CD4-positive, alpha-beta memory T cell (primary cell): ENCODE measurements at regions of chr16 and their contacts with region 1.

Region 1: GRCh38 chr16:2531767-2532493 is 722 bp upstream of the CEMP1 start:
- DNase-seq: peak; percentile 95 to 98 (median 96)
- H3K4me3 ChIP-seq: peak overlapping the region; percentile 67 to 95
- H3K4me3 Mint-ChIP-seq: peak overlapping the region; percentile 91 to 98 (median 96)
- H3K27ac ChIP-seq: peak overlapping the region; percentile 91
- H3K27ac Mint-ChIP-seq: peak overlapping the region; percentile 98 to 100 (median 99)
- H3K4me1 ChIP-seq: peaks cover 14% of the 10 kb centered on the region
- H3K4me1 Mint-ChIP-seq: peaks cover 4 to 35% (median 21%) of the 10 kb centered on the region in 4 donors
- H3K27me3 ChIP-seq: no peaks in the 10 kb centered on the region
- H3K27me3 Mint-ChIP-seq: peaks cover 0 to 2% of the 10 kb centered on the region in 2 donors

Region 2: DNA sequence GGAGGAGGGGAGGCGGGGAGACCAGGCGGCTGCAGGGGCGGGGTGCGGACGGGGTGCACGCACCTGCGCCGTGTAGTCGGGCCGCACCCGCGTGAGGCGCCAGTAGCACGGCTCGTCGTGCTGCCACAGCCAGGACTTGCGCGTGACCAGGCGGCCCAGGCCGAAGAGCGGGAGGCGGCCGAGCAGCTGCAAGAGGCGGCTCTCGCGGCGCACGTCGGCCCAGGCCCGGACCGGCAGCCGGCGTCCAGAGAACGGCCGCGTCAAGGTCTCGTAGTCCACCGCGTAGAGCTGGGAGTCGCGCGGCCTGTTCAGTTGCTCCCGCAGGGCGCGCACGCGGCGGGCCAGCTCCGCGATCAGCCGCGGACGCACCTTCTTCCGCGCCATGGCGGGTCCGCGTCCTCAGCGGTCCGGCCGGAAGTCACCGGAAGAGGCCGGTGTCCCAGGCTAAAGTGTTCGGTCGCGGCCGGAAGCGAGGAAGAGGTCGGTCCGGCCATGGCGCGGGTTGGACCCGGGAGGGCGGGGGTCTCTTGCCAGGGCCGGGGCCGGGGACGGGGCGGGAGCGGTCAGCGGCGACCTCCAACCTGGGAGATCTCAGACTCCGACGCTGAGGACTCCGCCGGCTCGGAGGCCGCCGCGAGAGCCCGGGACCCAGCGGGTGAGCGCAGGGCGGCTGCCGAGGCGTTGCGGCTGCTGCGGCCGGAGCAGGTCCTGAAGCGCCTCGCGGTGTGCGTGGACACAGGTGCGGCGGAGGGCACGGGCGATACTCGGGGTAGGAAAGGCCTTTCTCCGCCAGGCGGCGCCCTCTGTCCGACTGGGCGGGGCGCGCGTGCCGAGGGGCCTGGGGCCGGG is 759.0 kb before region 1 on chr16 and contains the starts of genes EME2 and MRPS34:
- CTCF ChIA-PET with region 1: no interaction called
- POLR2A ChIA-PET with region 1: interaction called, 4 read pairs
- intact Hi-C with region 1: loop called (anchors 5 kb)
- DNase-seq: peak; percentile 72 to 78 (median 74)
- H3K4me3 ChIP-seq: peak within 1 kb of the TSS; percentile 45 to 88
- H3K4me3 Mint-ChIP-seq: peak within 1 kb of the TSS; percentile 85 to 98 (median 96)
- H3K27ac ChIP-seq: peak within 1 kb of the TSS; percentile 72
- H3K27ac Mint-ChIP-seq: peak within 1 kb of the TSS; percentile 90 to 97 (median 95)
- H3K4me1 ChIP-seq: peaks cover 29% of the 10 kb centered on the region
- H3K4me1 Mint-ChIP-seq: peaks cover 11 to 32% (median 15%) of the 10 kb centered on the region in 4 donors
- H3K27me3 ChIP-seq: no peaks in the 10 kb centered on the region
- H3K27me3 Mint-ChIP-seq: no peaks in the 10 kb centered on the region
- total RNA-seq, gene EME2: 32.9 to 33.1 TPM
- total RNA-seq, gene MRPS34: 57.6 to 67.3 TPM

Region 3: GRCh38 chr16:2459647-2460390 is 72.1 kb before region 1 on chr16 and contains the start of gene TEDC2:
- CTCF ChIA-PET with region 1: no interaction called
- POLR2A ChIA-PET with region 1: interaction called, 3 read pairs
- intact Hi-C with region 1: loop called (anchors 2 kb)
- DNase-seq: peak; percentile 94 to 97 (median 96)
- H3K4me3 ChIP-seq: peak within 1 kb of the TSS; percentile 42 to 56
- H3K4me3 Mint-ChIP-seq: peak within 1 kb of the TSS; percentile 86 to 93 (median 88)
- H3K27ac ChIP-seq: peak within 1 kb of the TSS; percentile 53
- H3K27ac Mint-ChIP-seq: peak within 1 kb of the TSS; percentile 38 to 90 (median 80)
- H3K4me1 ChIP-seq: peaks cover 14% of the 10 kb centered on the region
- H3K4me1 Mint-ChIP-seq: peaks cover 5 to 8% (median 6%) of the 10 kb centered on the region in 4 donors
- H3K27me3 ChIP-seq: no peaks in the 10 kb centered on the region
- H3K27me3 Mint-ChIP-seq: no peaks in the 10 kb centered on the region
- total RNA-seq, gene TEDC2: 0.44 to 0.55 TPM

Region 4: DNA sequence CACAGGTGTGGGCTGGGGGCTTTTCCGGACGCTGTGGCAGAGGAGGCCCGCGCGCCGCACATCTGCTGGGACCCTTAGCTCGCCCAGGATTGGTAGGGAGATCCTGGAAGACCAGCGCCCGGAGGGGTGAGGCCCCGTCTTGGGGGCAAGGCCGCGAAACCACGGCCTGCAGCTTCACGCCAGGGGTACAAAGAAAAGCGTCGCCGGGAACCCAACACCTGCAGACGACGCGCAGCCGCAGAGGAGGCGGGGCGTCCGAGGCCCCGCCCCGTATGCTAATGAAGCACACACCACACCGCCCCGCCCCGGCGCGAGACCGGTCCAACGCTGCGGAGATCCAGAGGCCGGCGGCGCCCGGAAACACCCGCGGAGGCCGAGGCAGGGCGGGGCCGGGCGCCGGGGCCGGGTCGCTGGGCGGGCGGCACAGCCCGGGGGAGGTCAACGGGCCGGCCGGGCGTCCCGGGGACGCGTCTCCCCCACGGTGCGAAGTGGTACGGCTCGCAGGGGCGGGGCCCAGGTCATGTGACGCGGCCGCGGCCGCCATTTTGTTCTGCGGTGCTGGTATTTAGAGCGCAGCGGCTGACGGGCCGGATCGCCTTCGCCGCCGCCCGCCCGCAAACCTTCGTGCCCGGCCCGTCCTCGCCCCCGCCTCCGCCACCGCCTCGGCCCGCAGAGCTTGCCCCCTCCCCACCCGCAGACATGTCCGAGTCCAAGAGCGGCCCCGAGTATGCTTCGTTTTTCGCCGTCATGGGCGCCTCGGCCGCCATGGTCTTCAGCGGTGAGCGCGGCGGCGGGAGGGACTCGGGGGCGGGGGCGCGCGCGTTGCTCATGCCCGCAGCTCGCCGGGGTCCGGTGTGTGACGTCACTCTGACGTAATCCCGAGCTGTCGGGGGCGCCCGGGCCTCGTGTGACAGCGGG is 18.3 kb before region 1 on chr16 and contains the start of gene ATP6V0C:
- CTCF ChIA-PET with region 1: interaction called, 3 read pairs
- POLR2A ChIA-PET with region 1: interaction called, 170 read pairs
- intact Hi-C with region 1: loop called (anchors 1 kb)
- DNase-seq: peak; percentile 90 to 97 (median 94)
- H3K4me3 ChIP-seq: peak within 1 kb of the TSS; percentile 74 to 77
- H3K4me3 Mint-ChIP-seq: peak within 1 kb of the TSS; percentile 90 to 96 (median 92)
- H3K27ac ChIP-seq: peak within 1 kb of the TSS; percentile 94
- H3K27ac Mint-ChIP-seq: peak within 1 kb of the TSS; percentile 91 to 98 (median 97)
- H3K4me1 ChIP-seq: peaks cover 48% of the 10 kb centered on the region
- H3K4me1 Mint-ChIP-seq: peaks cover 32 to 64% (median 46%) of the 10 kb centered on the region in 4 donors
- H3K27me3 ChIP-seq: no peaks in the 10 kb centered on the region
- H3K27me3 Mint-ChIP-seq: no peaks in the 10 kb centered on the region
- total RNA-seq, gene ATP6V0C: 125 to 129 TPM

Region 5: GRCh38 chr16:2520092-2520783 is 11.7 kb before region 1 on chr16 and contains the start of gene AMDHD2:
- CTCF ChIA-PET with region 1: interaction called, 4 read pairs
- POLR2A ChIA-PET with region 1: interaction called, 170 read pairs
- intact Hi-C with region 1: loop called (anchors 1 kb)
- DNase-seq: peak; percentile 88 to 91 (median 89)
- H3K4me3 ChIP-seq: peak within 1 kb of the TSS; percentile 36 to 60
- H3K4me3 Mint-ChIP-seq: peak within 1 kb of the TSS; percentile 87 to 95 (median 93)
- H3K27ac ChIP-seq: peak within 1 kb of the TSS; percentile 84
- H3K27ac Mint-ChIP-seq: peak within 1 kb of the TSS; percentile 91 to 99 (median 97)
- H3K4me1 ChIP-seq: peaks cover 58% of the 10 kb centered on the region
- H3K4me1 Mint-ChIP-seq: peaks cover 42 to 69% (median 57%) of the 10 kb centered on the region in 4 donors
- H3K27me3 ChIP-seq: no peaks in the 10 kb centered on the region
- H3K27me3 Mint-ChIP-seq: peaks cover 0 to 1% of the 10 kb centered on the region in 2 donors
- total RNA-seq, gene AMDHD2: 114 to 121 TPM

Region 6: DNA sequence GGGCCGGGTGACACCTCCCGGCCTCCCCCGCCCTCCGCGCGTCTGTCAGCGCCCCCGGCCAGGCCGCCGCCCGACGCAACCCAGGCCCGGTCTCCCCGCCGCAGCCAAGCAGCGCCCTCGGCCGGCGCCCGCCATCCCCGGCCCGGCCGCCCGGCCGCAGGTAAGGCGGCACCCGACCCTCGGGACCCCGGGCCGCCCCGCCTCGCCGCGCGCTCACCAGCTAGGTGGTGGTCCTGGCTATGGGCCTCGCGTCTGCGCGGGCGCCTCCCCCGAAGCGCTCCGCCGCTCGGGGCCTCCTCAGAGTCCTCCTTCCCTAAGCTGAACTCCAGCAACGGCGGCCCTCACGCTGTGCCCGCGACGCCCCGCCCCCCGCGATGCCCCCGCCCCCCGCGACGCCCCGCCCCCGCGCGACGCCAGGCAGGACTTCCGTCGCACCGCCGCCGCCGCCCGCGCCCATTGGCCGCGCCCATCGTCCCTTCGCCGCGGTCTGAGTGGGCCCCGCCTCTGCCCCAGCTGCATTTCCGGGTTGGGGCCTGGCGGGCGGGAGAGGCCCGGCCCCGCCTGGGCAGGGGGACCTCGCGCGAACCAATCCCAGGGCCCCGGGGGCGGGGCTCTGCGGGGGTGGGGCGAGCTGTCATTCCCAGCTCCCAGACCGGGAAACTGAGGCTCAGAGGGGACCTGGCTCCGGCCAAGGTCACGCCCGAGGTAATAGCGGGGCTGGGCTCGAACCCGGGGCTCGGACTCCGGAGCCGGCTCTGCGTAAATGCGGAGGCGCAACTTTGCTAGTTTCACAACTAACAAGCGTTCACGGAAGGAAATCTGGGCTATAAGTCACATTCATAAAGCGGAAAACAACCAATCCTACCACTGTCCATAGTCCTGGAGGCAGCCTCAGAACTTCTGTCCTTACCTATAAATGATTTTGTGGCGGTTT is 141.4 kb after region 1 on chr16:
- CTCF ChIA-PET with region 1: no interaction called
- POLR2A ChIA-PET with region 1: interaction called, 4 read pairs
- intact Hi-C with region 1: loop called (anchors 1 kb)
- DNase-seq: peak; percentile 94 to 98 (median 97)
- H3K4me3 ChIP-seq: peak overlapping the region; percentile 70 to 81
- H3K4me3 Mint-ChIP-seq: peak overlapping the region; percentile 84 to 90 (median 88)
- H3K27ac ChIP-seq: peak overlapping the region; percentile 80
- H3K27ac Mint-ChIP-seq: peak overlapping the region; percentile 82 to 92 (median 87)
- H3K4me1 ChIP-seq: peaks cover 21% of the 10 kb centered on the region
- H3K4me1 Mint-ChIP-seq: peaks cover 14 to 49% (median 26%) of the 10 kb centered on the region in 4 donors
- H3K27me3 ChIP-seq: no peaks in the 10 kb centered on the region
- H3K27me3 Mint-ChIP-seq: no peaks in the 10 kb centered on the region

Region 7: GRCh38 chr16:2777231-2777902 is 245.4 kb after region 1 on chr16 and contains the start of gene ELOB:
- CTCF ChIA-PET with region 1: no interaction called
- POLR2A ChIA-PET with region 1: no interaction called
- intact Hi-C with region 1: loop called (anchors 10 kb)
- DNase-seq: peak; percentile 87 to 89 (median 89)
- H3K4me3 ChIP-seq: peak within 1 kb of the TSS; percentile 49 to 76
- H3K4me3 Mint-ChIP-seq: peak within 1 kb of the TSS; percentile 93 to 99 (median 94)
- H3K27ac ChIP-seq: peak within 1 kb of the TSS; percentile 99
- H3K27ac Mint-ChIP-seq: peak within 1 kb of the TSS; percentile 96 to 99 (median 98)
- H3K4me1 ChIP-seq: peaks cover 38% of the 10 kb centered on the region
- H3K4me1 Mint-ChIP-seq: peaks cover 18 to 44% (median 37%) of the 10 kb centered on the region in 4 donors
- H3K27me3 ChIP-seq: no peaks in the 10 kb centered on the region
- H3K27me3 Mint-ChIP-seq: no peaks in the 10 kb centered on the region
- total RNA-seq, gene ELOB: 83.0 to 86.8 TPM